Tibial artery (tissue), 4 donors: ENCODE measurements at regions of chr3 and their contacts with region 1.

Region 1: DNA sequence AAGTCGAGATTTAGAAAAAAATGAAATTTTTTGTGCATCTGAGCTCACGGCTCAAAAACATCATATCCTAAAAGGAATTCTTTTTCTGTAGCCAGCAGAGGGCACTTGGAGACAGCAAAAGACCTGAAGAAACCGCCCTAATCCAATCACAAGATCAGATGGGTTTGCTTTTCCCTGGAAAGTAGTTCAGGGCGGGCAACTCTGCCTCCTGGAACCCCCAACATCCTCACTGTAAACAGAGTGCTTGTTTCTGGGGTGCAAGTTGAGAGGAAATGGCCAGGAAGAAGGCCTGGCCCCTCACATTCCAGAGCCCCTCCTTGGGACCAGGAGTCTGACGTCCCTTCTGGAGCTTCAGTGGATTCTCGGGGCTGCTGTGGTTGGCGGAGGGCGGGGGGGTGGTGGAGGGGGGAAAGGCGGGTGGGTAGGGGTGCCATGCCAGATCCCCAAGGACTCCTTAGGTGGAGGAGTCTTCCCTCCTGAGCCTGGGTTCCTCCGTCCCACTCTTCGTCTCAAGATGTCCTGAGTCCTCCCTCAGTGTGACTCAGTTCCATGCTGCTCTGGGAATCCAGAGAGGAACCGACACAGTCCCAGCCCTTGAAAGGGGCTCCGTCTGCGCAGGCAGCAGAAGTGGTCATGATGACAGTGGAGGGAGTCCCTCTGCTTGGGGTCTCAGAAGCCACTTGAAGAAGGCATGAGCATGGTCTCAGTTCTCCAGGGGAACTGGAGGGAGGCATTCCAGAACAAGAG is 35.9 kb downstream of the CCK start:
- DNase-seq: no peak
- H3K4me3 ChIP-seq: peak overlapping the region; percentile 16 to 42
- H3K27ac ChIP-seq: peak overlapping the region in 1 of 2 donors; percentile 27
- H3K4me1 ChIP-seq: peaks cover 0 to 18% (median 11%) of the 10 kb centered on the region in 4 donors
- H3K27me3 ChIP-seq: peaks cover 0 to 3% of the 10 kb centered on the region in 2 donors
- CTCF ChIP-seq: peak; percentile 55 to 76

Region 2: DNA sequence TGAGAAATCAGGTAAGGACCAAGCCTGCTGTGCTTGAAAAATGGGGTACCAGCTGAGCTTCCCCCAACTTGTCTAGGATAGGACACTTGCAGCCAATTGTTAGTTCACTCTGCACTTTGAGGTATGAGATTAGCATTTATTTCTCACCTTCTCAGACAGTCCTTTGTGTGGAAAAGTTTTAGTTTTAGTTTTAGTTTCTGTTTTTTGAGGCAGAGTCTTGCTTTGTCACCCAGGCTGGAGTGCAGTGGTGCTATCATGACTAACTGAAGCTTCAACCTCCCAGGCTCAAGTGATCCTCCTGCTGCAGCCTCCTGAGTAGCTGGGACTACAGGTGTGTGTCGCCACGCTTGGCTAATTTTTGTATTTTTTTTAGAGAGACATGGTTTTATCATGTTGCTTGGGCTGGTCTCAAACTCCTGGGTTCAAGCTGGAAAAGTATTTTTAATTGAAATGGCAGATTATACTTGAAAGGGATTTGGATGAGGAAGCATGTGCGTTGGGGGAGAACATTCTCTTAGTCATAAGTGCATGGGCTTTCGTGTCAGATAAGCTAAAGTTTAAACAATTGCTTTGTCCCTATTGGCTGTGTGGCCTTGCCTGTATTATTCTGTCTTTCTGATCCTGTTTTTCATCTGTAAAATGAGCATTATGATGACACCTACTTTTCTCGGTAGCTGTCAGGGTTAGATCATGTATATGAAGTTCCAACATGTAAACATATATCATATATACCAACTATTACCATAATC is 61.0 kb after region 1 on chr3:
- intact Hi-C with region 1: no loop called
- DNase-seq: no peak
- H3K4me3 ChIP-seq: no peak overlapping the region
- H3K27ac ChIP-seq: no peak overlapping the region
- H3K4me1 ChIP-seq: no peaks in the 10 kb centered on the region
- H3K27me3 ChIP-seq: peaks cover 0 to 11% of the 10 kb centered on the region in 2 donors
- CTCF ChIP-seq: no peak

Region 3: DNA sequence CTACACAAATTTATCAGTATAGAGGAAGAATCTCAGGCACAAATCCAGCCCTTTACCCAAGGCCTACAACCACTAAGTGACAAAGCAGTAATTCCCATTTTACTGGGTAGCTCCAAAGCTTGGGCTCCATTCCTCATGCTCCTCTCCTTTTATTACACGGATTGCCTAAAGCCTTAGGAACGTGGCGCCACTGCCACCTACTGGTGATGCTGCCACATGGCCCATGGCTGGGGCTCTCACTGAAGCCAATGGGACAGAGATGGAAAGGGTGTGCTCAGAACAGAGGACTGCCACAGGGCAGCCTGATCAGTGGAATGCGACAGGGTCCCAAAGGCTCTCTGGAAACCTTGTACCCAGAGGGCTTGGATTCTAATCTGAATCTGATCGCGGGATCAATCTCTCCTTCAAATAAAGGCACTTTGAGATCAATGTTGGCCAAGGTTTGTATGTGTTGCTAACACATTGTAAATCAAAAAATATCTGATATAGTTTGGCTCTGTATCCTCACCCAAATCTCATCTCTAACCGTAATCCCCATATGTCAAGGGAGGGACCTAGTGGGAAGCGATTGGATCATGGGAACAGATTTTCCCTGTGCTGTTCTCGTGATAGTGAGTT is 213.8 kb after region 1 on chr3:
- intact Hi-C with region 1: loop called (anchors 2 kb)
- DNase-seq: peak; percentile 79 to 84
- H3K4me3 ChIP-seq: no peak overlapping the region
- H3K27ac ChIP-seq: no peak overlapping the region
- H3K4me1 ChIP-seq: no peaks in the 10 kb centered on the region
- H3K27me3 ChIP-seq: peaks cover 0 to 15% of the 10 kb centered on the region in 2 donors
- CTCF ChIP-seq: peak; percentile 96 to 99

Region 4: DNA sequence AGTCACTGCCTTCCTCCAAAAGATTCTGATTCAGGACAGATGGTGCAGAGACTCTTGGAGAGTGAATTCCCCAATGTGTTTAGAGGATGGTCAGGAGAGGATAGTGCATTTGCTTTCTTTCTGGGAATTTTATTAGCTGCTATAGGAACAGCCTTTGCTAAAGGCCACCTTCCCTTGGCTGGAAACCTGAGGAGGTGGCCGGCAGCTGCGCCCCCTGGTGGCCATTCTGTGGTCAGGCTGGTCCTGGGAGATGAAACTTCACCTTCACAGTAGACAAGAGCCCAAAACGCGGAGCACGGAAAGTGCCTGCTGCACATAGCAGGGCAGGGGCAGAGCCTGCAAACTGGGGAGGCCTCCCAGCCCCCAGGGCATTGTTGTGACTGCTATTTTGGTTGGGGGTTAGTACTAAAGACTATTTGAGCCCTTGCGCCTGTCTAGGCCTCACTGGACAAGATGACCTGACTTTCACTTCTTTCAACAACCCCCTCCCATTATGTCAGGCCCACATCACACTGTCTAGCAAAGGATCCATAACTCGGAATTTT is 317.4 kb after region 1 on chr3:
- intact Hi-C with region 1: loop called (anchors 10 kb)
- DNase-seq: peak; percentile 63 to 78
- H3K4me3 ChIP-seq: no peak overlapping the region
- H3K27ac ChIP-seq: peak overlapping the region; percentile 83 to 84
- H3K4me1 ChIP-seq: peaks cover 0 to 60% (median 45%) of the 10 kb centered on the region in 4 donors
- H3K27me3 ChIP-seq: no peaks in the 10 kb centered on the region
- CTCF ChIP-seq: peak; percentile 87 to 94